MCF 10A (cell line): ENCODE measurements at regions of chr3 and their contacts with region 1.

Region 1: DNA sequence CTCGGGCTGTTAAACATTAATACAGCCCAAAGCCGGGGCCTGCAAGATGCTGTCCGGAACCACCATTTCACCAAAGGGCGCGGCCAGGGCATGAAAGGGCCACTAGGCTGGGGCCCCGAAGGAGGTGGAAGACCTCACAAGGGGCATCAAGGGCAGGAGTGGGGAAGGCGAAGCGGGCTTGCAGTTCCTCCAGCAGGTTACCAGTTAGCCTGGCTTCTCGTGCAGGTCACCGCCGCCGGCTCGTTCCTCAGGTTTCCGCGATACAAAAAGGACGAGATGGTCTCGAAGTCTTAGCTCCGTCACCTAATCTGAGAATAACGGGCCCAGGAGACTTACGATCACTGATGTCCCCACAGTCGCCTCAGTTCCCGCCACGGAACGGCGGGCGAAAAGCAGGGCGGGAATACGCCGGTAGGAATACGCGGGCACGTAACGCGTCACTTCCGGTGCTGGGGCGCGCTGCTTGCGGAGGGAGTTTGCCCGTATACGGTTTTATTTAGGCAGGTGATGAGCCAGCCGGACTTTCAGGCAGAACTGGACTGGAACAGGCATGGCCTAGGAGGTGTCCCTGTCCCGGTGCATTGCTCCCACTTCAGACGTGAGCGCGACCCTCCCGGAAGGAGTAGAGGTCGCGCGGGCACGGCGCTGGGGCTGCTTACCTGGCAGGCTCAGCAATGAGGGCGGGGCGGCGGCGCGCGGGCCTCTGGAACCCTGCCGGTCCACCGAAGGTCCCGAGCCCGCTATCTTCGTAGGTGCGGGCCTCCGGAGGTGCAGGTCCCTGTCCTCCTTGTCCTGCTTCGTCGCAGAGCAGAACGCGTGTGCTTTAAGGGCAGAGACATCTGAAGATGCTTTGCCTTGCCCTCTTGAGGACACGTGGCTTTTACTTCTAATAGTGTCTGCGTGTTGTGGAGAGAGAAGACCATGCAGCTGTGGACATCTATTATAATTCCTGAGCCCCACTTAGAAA is at the start of gene RFC4:
- DNase-seq: peak; percentile 77
- H3K4me3 Mint-ChIP-seq: peak within 1 kb of the TSS; percentile 79
- H3K27ac Mint-ChIP-seq: peak within 1 kb of the TSS; percentile 83
- H3K4me1 Mint-ChIP-seq: peaks cover 6% of the 10 kb centered on the region
- H3K27me3 Mint-ChIP-seq: no peaks in the 10 kb centered on the region
- CTCF ChIP-seq: no peak
- total RNA-seq, gene RFC4: 23.9 and 33.2 TPM in 2 replicates

Region 2: GRCh38 chr3:186021673-186022362 is 784.6 kb before region 1 on chr3:
- CTCF ChIA-PET with region 1: no interaction called
- POLR2A ChIA-PET with region 1: no interaction called
- intact Hi-C with region 1: no loop called
- DNase-seq: peak; percentile 81
- H3K4me3 Mint-ChIP-seq: no peak overlapping the region
- H3K27ac Mint-ChIP-seq: peak overlapping the region; percentile 83
- H3K4me1 Mint-ChIP-seq: peaks cover 13% of the 10 kb centered on the region
- H3K27me3 Mint-ChIP-seq: no peaks in the 10 kb centered on the region
- CTCF ChIP-seq: no peak

Region 3: GRCh38 chr3:186790261-186790981 is 16.0 kb before region 1 on chr3:
- CTCF ChIA-PET with region 1: interaction called, 3 read pairs
- POLR2A ChIA-PET with region 1: interaction called, 102 read pairs
- intact Hi-C with region 1: loop called (anchors 2 kb)
- DNase-seq: peak; percentile 73
- H3K4me3 Mint-ChIP-seq: no peak overlapping the region
- H3K27ac Mint-ChIP-seq: peak overlapping the region; percentile 70
- H3K4me1 Mint-ChIP-seq: peaks cover 42% of the 10 kb centered on the region
- H3K27me3 Mint-ChIP-seq: no peaks in the 10 kb centered on the region
- CTCF ChIP-seq: no peak

Region 4: DNA sequence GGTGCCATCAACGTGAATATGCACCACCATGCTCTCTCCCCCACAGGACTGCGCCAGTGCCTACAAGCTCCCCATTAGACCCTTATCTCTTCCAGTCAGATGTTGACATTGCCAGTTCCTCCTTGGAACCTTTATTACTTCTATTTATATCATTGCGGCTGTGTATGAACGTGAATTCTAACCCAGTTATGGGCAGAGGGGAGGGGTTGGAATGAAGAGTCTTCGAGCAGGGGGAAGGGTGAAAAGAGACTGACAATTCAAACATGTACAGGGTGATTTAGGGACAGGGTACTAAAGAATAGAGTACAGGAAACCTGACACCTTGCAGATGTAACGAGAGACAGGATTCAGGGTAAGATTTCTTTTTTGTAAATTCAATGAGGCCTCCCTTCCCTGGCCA is 82.2 kb after region 1 on chr3:
- CTCF ChIA-PET with region 1: no interaction called
- POLR2A ChIA-PET with region 1: no interaction called
- intact Hi-C with region 1: no loop called
- DNase-seq: no peak
- H3K4me3 Mint-ChIP-seq: no peak overlapping the region
- H3K27ac Mint-ChIP-seq: no peak overlapping the region
- H3K4me1 Mint-ChIP-seq: no peaks in the 10 kb centered on the region
- H3K27me3 Mint-ChIP-seq: peaks cover 12% of the 10 kb centered on the region
- CTCF ChIP-seq: no peak